ENCODE measurements at regions of chr5 and their contacts with region 1.

Region 1: DNA sequence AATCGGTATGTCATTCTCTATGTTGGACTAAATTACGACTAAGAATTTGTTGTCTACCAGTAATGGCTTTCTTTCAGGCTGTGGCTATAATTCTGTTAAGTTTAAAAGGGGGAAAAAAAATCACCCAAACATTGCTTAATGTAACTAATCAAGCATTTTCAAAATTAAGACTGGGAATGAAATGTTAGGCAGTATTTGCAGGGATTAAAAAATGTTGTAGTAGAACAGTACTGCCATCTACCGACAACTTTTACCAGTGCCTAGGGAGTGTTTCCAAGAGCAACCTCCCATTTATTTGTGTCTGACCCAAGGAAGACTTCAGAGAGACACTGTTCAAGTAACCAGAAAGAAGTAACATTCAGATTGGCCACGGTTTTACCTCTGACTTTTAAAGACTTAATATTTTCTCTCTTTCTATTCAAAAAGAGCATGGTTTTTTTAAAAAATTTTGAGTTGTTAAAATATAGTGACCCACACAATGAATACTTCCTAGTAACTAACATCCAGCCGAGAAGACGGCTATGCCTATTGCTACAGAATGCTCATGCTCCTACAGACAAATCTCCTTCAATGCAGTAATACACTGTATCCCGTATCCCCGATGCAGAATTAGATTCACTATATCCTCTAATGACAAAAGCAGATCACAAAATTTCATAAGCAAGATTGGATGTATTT is 92.4 kb downstream of the ARL15 start:
- DNase-seq: peak; percentile 42
- H3K4me3 ChIP-seq: no peak overlapping the region
- H3K27ac ChIP-seq: no peak overlapping the region
- H3K4me1 ChIP-seq: no peaks in the 10 kb centered on the region
- H3K27me3 ChIP-seq: no peaks in the 10 kb centered on the region
- CTCF ChIP-seq: peak; percentile 82 to 83

Region 2: GRCh38 chr5:53170748-53171349 is 1047.1 kb before region 1 on chr5:
- CTCF ChIA-PET with region 1: no interaction called
- dilution Hi-C with region 1: no loop called
- in situ Hi-C with region 1: loop called (anchors 25 kb)
- intact Hi-C with region 1: loop called (anchors 2 kb)
- DNase-seq: peak; percentile 52
- H3K4me3 ChIP-seq: no peak overlapping the region
- H3K27ac ChIP-seq: peak overlapping the region; percentile 51
- H3K4me1 ChIP-seq: no peaks in the 10 kb centered on the region
- H3K27me3 ChIP-seq: no peaks in the 10 kb centered on the region
- CTCF ChIP-seq: peak; percentile 77 to 78

Region 3: DNA sequence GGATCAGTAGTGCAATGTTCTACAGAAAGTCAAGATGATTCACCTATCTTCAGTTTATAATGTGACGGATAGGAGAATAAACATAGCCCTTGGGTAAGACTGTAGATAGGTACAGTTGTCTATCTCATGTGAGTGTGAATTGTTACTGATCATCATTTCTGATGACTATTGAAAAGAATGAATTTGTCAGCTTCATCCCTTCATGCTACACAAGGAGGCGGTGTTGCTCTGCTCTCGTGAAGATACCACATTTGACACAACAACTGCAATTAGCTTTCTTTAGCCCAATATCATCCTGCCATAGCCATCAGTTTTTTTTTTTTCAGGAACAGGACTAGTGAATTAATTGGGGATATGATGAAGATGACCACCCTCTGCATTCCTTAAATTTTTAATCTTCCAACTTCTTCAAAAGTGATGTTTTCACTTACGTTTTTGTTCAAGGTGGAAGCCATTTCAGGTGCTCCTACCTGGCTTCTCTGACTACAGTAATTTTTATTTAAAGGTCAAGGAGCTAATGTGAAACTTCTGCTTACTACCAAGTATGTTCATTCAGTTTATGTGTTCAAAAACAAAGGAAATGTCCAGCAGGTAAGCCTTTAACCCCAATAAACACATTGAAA is 955.5 kb before region 1 on chr5:
- CTCF ChIA-PET with region 1: no interaction called
- dilution Hi-C with region 1: no loop called
- in situ Hi-C with region 1: no loop called
- intact Hi-C with region 1: loop called (anchors 2 kb)
- DNase-seq: peak; percentile 60
- H3K4me3 ChIP-seq: no peak overlapping the region
- H3K27ac ChIP-seq: peak overlapping the region; percentile 48
- H3K4me1 ChIP-seq: peaks cover 44% of the 10 kb centered on the region
- H3K27me3 ChIP-seq: no peaks in the 10 kb centered on the region
- CTCF ChIP-seq: peak; percentile 63 to 68

Region 4: DNA sequence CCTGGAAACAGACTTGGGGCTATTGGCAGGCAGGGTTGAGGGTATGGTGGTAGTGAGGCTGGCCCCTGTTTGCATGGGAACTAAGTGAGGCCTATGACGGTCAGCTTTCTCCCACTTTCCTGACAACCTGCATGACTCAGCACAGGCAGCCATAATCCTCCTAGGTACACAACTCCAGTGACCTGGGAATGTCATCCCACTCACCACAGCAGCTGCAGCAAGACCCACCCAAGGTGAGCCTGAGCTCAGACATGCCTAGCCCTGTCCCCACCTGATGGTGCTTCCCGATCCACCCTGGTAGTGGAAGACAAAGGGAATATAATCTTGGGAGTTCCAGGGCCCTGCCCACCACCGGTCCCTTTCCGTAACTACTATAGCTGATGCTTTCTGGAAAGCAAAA is 478.9 kb before region 1 on chr5:
- CTCF ChIA-PET with region 1: no interaction called
- dilution Hi-C with region 1: no loop called
- in situ Hi-C with region 1: no loop called
- intact Hi-C with region 1: loop called (anchors 5 kb)
- DNase-seq: peak; percentile 12
- H3K4me3 ChIP-seq: no peak overlapping the region
- H3K27ac ChIP-seq: no peak overlapping the region
- H3K4me1 ChIP-seq: no peaks in the 10 kb centered on the region
- H3K27me3 ChIP-seq: no peaks in the 10 kb centered on the region
- CTCF ChIP-seq: no peak

Region 5: DNA sequence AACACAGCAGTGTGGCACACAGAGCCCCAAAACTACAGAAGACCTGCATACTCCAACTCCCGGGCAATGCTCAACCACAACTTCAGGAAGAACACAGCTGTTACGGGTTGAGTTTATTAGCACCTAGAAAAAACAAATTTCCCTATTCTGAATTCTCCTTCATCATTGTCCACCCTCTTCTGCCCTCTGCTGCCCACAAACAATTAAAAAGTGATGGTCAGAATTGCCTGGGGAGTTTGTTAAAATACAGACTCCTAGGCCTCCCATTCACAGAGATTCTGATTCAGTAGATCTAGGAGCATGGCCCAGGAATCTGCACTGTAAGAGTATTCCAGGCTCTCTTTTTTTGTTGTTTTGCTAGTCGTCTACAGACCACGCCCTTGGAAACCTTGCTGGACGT is 346.9 kb before region 1 on chr5:
- CTCF ChIA-PET with region 1: no interaction called
- dilution Hi-C with region 1: no loop called
- in situ Hi-C with region 1: no loop called
- intact Hi-C with region 1: loop called (anchors 1 kb)
- DNase-seq: peak; percentile 3
- H3K4me3 ChIP-seq: no peak overlapping the region
- H3K27ac ChIP-seq: no peak overlapping the region
- H3K4me1 ChIP-seq: no peaks in the 10 kb centered on the region
- H3K27me3 ChIP-seq: no peaks in the 10 kb centered on the region
- CTCF ChIP-seq: peak in 1 of 2 donors; percentile 14

Region 6: DNA sequence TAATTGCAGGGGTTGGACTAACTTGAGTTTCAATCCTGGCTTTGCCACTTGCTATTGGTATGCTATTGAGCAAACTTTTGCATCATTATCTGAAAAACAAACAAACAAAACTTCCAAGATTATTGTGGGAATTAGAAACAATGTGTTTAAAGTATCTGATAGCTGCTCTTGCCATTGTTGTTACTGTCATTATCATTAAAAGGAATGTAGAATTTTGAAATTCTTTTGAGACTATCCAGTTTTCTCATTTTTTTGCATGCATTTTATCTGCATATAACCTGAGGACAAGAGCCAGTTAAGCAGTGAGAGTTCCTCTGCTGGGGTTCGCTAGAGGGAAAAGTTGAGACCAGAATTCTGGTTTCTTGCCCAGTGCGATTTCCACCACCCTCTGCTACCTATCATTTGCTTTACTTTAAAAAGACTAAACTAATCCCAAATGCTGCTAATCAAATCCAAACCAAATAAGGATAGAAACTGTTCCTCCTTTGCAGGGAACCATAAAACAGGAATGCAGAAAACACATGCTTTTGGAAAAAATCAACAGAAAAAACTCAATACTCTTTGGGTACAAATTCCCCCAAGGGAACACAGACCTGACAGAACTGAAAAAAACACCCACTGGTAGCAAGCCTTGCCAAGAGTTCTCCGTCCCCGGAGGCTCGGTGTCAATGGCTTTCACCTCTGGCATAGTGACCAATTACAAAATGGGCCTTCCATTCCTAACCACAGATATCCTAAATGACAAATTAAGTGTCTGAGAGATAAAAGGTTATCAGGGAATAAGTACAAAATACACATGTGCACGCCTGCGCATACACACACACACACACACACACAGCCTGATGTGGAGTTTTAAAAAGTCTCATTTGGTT is 281.2 kb before region 1 on chr5:
- CTCF ChIA-PET with region 1: no interaction called
- dilution Hi-C with region 1: no loop called
- in situ Hi-C with region 1: no loop called
- intact Hi-C with region 1: no loop called
- DNase-seq: no peak
- H3K4me3 ChIP-seq: no peak overlapping the region
- H3K27ac ChIP-seq: no peak overlapping the region
- H3K4me1 ChIP-seq: peaks cover 8% of the 10 kb centered on the region
- H3K27me3 ChIP-seq: no peaks in the 10 kb centered on the region
- CTCF ChIP-seq: no peak

Region 7: DNA sequence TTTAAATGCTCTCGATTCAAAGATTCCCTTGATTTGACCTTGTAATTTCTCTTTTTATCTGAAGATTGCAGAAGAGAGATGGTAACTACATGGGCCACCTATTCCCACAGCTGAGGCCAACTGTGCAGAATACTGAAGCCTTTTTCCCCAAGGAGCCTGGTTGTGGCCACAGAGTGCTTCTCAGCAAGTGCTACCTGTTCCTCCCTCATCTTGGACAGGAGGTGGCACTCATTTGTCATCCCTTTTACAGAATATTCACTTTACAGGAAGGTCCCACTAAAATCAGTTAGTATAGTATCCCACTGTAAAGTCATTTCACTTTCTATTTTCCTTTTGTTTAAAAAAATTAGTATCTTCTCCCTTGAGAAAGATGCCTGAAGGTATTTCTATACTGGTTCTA is 254.0 kb before region 1 on chr5:
- CTCF ChIA-PET with region 1: no interaction called
- dilution Hi-C with region 1: no loop called
- in situ Hi-C with region 1: no loop called
- intact Hi-C with region 1: loop called (anchors 1 kb)
- DNase-seq: no peak
- H3K4me3 ChIP-seq: no peak overlapping the region
- H3K27ac ChIP-seq: no peak overlapping the region
- H3K4me1 ChIP-seq: no peaks in the 10 kb centered on the region
- H3K27me3 ChIP-seq: no peaks in the 10 kb centered on the region
- CTCF ChIP-seq: peak in 1 of 2 donors; percentile 23

Region 8: GRCh38 chr5:54093081-54093492 is 124.9 kb before region 1 on chr5:
- CTCF ChIA-PET with region 1: no interaction called
- dilution Hi-C with region 1: no loop called
- in situ Hi-C with region 1: no loop called
- intact Hi-C with region 1: loop called (anchors 1 kb)
- DNase-seq: peak; percentile 81
- H3K4me3 ChIP-seq: no peak overlapping the region
- H3K27ac ChIP-seq: peak overlapping the region; percentile 3
- H3K4me1 ChIP-seq: peaks cover 37% of the 10 kb centered on the region
- H3K27me3 ChIP-seq: no peaks in the 10 kb centered on the region
- CTCF ChIP-seq: no peak